Activated CD4-positive, alpha-beta T cell treated with anti-CD3 and anti-CD28 coated beads for 36 hours (primary cell): ENCODE measurements at regions of chr17 and their contacts with region 1.

Region 1: DNA sequence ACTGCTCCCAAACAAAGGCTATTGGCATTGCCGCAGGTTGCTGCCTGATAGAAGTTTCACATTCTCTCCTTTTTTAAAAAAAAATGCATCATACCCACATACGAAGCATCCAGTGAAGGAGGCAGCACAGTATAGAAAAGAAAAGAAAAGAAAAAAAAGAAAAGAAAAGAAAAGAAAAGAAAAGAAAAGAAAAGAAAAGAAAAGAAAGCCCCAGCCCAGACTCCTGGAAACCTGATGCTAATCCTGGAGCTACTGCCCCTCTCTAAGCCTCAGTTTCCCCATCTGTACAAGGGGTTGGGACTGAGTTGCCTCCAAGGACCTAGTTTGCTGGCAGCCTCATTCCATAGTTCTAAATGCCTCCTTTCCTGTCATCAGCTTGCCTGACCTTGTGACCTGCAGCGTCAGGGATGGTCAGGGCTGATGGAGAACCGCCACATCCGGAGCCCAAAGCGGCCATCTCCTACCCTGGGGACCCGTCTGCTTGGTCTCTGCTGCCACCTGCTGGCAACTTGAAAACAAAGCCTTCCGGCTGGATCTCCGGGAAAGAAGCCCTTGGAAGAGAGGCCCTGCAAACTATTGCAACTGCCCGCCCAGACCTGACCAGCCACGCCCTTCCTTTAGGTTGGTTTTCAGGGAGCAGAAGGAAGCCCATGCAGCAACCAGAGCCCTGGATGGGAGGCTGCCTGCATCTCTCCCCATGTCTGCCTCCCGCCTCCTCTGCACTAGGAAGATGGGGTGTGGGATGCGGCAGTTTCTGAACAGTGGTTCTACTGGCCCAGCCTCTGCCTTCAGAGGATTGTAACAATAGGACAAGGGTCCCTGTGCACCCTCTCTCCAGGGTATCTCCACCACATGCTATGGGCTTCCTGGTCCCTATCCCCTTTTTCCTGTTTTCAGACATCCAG is 13.0 kb downstream of the AIPL1 start:
- DNase-seq: peak; percentile 87
- ATAC-seq: peak; percentile 65
- H3K4me3 Mint-ChIP-seq: no peak overlapping the region
- H3K27ac Mint-ChIP-seq: no peak overlapping the region
- H3K4me1 Mint-ChIP-seq: peaks cover 2% of the 10 kb centered on the region
- H3K27me3 Mint-ChIP-seq: peaks cover 12% of the 10 kb centered on the region

Region 2: DNA sequence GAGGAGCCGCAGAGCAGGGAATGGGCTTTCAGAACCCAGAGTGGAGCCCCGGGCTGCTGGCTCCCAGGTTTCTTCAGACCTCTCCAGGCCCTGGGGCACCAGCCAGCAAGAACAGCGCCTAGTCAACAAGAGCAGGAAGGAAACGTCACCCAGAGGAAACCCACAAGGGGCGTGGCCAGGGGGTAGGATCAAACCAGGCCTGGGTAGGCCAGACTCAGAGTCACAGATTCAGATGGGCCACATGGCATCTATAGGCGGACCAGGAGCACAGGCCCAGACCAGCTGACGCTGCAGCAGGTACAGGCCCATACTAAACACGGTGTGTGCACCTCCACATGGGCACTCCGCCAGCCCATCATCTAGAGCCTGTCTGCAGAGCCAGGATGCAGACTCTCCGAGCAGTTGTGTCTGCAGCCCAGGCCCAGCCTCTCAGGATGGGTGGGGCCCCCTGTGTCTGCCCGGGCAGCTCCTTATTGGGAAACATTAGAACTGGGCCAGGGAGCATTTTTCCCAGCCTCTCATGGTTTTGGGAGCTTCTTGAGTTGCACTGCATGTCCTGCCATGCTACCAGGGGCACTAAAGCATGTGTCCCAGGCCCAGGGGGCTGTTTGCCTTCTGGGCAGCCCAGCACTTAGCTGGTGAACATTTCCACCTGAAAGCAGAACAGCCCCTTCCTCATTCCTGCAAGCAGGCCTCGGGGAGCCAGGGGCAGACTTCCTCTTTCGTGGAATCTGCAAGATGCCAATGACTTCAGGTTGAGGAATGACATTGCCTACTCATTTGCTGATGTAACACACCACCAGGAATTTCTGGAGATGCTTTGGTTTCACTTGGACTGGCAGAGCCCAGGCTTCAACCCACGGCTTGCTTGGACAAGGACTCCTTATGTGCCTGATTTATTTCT is 837.3 kb before region 1 on chr17 and contains the start of gene NLRP1:
- CTCF ChIA-PET with region 1: no interaction called
- POLR2A ChIA-PET with region 1: no interaction called
- intact Hi-C with region 1: loop called (anchors 1 kb)
- DNase-seq: peak; percentile 97
- ATAC-seq: peak; percentile 93
- H3K4me3 Mint-ChIP-seq: peak within 1 kb of the TSS; percentile 92
- H3K27ac Mint-ChIP-seq: peak within 1 kb of the TSS; percentile 94
- H3K4me1 Mint-ChIP-seq: peaks cover 62% of the 10 kb centered on the region
- H3K27me3 Mint-ChIP-seq: no peaks in the 10 kb centered on the region
- total RNA-seq, gene NLRP1: 31.2 to 34.0 TPM

Region 3: GRCh38 chr17:5592382-5592781 is 829.6 kb before region 1 on chr17:
- CTCF ChIA-PET with region 1: interaction called, 5 read pairs
- POLR2A ChIA-PET with region 1: no interaction called
- intact Hi-C with region 1: loop called (anchors 1 kb)
- DNase-seq: no peak
- ATAC-seq: no peak
- H3K4me3 Mint-ChIP-seq: no peak overlapping the region
- H3K27ac Mint-ChIP-seq: no peak overlapping the region
- H3K4me1 Mint-ChIP-seq: peaks cover under 1% of the 10 kb centered on the region
- H3K27me3 Mint-ChIP-seq: peaks cover 9% of the 10 kb centered on the region

Region 4: GRCh38 chr17:5706577-5707216 is 715.3 kb before region 1 on chr17:
- CTCF ChIA-PET with region 1: no interaction called
- POLR2A ChIA-PET with region 1: no interaction called
- intact Hi-C with region 1: loop called (anchors 5 kb)
- DNase-seq: peak; percentile 78
- ATAC-seq: peak; percentile 63
- H3K4me3 Mint-ChIP-seq: no peak overlapping the region
- H3K27ac Mint-ChIP-seq: no peak overlapping the region
- H3K4me1 Mint-ChIP-seq: no peaks in the 10 kb centered on the region
- H3K27me3 Mint-ChIP-seq: peaks cover 12% of the 10 kb centered on the region

Region 5: GRCh38 chr17:5793899-5794298 is 628.1 kb before region 1 on chr17:
- CTCF ChIA-PET with region 1: no interaction called
- POLR2A ChIA-PET with region 1: no interaction called
- intact Hi-C with region 1: loop called in 1 of 2 experiments (anchors 10 kb)
- DNase-seq: no peak
- ATAC-seq: no peak
- H3K4me3 Mint-ChIP-seq: no peak overlapping the region
- H3K27ac Mint-ChIP-seq: no peak overlapping the region
- H3K4me1 Mint-ChIP-seq: no peaks in the 10 kb centered on the region
- H3K27me3 Mint-ChIP-seq: peaks cover 28% of the 10 kb centered on the region

Region 6: DNA sequence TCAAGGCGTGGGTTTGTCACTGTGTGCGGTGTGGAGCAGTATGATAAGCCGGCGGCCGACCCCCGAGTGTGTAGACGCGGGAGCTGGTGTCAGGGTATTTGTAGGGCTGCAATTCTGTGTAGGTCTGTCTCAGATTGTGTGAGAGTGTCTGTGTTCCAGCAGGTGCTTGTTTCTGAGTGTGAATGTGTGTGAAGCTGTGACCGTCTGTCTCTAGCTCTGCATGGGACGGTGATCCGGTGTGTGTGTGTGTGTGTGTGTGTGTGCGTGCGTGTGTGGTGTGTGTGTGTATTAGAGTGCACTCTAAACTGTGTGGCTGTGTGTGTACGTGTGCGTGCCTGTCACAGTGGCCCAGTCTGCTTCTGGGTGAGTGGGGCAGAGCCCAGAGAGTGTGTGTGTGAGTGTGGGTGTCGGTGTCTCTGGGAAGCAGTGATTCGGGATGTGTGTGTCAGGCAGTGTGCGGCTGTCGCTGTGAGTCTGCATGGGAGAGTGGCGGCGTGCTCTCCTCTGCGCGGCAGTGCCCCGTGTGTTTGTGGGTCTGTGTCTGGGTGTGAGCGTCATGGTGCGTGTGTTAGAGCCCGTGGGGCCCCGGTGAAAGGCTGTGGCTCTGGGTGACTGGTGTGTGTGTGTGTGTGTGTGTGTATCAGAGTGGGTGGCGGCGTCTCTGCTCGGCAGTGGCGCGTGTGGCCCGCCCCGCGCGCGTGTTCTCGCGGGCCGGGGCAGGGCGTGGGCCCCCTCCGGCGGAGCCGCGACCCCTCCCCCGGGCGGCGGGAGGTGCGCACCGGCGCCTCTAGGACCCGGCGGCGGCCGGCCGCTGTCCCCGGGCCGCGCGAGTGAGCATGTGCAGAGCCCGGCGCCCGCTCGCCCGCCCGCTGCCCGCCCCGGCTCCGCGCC is 352.2 kb before region 1 on chr17 and contains the start of gene WSCD1:
- CTCF ChIA-PET with region 1: interaction called, 4 read pairs
- POLR2A ChIA-PET with region 1: no interaction called
- intact Hi-C with region 1: loop called in 1 of 2 experiments (anchors 10 kb)
- DNase-seq: peak; percentile 28
- ATAC-seq: peak; percentile 12
- H3K4me3 Mint-ChIP-seq: peak within 1 kb of the TSS; percentile 61
- H3K27ac Mint-ChIP-seq: no peak within 1 kb of the TSS
- H3K4me1 Mint-ChIP-seq: peaks cover 10% of the 10 kb centered on the region
- H3K27me3 Mint-ChIP-seq: peaks cover 55% of the 10 kb centered on the region
- total RNA-seq, gene WSCD1: 0.04 to 0.16 TPM

Region 7: DNA sequence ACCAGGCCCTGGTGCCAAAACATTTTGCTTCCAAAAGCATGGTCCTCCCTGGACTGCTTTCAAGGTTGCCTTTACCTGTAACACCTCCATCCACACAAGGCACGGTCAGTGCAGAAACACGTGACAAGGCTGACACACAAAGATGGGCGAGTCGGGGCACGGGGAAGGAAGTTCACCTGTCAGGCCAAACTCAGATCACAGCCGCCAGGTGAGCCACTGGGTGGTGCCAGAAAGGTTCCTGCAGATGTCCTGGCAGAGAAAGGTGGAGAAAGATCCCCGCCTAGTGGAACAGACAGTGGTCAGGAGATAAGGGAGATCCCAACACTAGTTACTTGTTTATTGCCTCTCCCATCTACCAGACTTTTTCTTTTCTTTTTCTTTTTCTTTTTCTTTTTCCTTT is 142.3 kb before region 1 on chr17:
- CTCF ChIA-PET with region 1: interaction called, 3 read pairs
- POLR2A ChIA-PET with region 1: no interaction called
- intact Hi-C with region 1: loop called in 1 of 2 experiments (anchors 5 kb)
- DNase-seq: peak; percentile 30
- ATAC-seq: no peak
- H3K4me3 Mint-ChIP-seq: no peak overlapping the region
- H3K27ac Mint-ChIP-seq: no peak overlapping the region
- H3K4me1 Mint-ChIP-seq: no peaks in the 10 kb centered on the region
- H3K27me3 Mint-ChIP-seq: peaks cover 12% of the 10 kb centered on the region

Region 8: DNA sequence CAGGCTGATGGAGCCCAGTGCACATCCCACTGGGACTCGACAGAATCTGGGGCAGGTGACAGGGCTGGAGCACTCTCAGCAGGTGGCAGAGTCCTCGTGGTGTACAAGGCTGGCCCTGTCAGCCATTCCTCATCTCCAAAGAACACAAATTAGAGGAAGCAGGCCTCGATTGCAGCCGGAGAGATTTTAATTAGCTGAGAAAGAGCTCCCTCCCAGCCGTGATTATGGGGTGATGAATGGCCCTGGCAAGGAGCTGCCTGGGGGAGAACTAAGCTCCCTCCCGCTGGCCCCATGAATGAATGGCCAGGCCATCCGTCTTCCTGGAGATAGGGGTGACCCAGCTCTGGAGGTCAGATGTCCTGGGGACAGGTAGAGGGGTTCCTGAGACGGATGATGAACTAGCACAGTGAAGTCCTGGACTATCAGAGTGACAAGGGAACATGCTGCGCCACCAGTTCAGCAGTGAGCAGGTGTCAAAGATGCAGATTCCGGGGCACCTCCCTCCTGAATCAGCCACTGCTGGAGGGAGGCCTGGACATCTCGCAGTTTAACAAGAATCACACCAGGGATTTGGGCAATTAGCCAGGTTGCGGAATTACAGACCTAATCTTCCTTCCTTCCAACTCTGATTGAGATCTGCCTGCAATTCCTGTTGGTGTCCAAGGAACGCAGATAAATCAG is 57.8 kb after region 1 on chr17:
- CTCF ChIA-PET with region 1: no interaction called
- POLR2A ChIA-PET with region 1: no interaction called
- intact Hi-C with region 1: no loop called
- DNase-seq: no peak
- ATAC-seq: no peak
- H3K4me3 Mint-ChIP-seq: no peak overlapping the region
- H3K27ac Mint-ChIP-seq: no peak overlapping the region
- H3K4me1 Mint-ChIP-seq: no peaks in the 10 kb centered on the region
- H3K27me3 Mint-ChIP-seq: peaks cover 4% of the 10 kb centered on the region

Region 9: DNA sequence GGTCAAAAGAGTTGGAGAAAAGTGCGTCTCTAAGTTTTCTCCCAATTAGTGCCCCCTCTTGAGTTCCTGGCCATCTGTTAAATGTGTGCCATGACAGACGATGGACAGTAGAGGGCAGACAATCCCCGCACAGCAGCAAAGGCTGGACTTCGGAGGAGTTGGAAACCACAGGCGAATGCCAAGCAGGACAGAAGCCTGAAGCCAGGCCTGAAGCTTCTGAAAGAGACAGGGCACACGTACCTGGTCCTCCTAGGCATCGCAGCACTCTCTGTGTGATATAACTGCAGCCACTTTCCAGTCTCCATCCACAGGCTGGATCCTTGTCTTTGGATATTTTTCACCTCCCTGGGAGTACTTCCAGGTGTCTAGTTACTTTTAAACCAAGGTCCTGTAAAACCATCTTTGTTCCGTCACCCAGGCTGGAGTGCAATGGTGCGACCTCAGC is 244.1 kb after region 1 on chr17:
- CTCF ChIA-PET with region 1: no interaction called
- POLR2A ChIA-PET with region 1: no interaction called
- intact Hi-C with region 1: no loop called
- DNase-seq: peak; percentile 69
- ATAC-seq: peak; percentile 75
- H3K4me3 Mint-ChIP-seq: no peak overlapping the region
- H3K27ac Mint-ChIP-seq: no peak overlapping the region
- H3K4me1 Mint-ChIP-seq: peaks cover 7% of the 10 kb centered on the region
- H3K27me3 Mint-ChIP-seq: no peaks in the 10 kb centered on the region

Region 10: GRCh38 chr17:6823011-6823442 is 401.1 kb after region 1 on chr17:
- CTCF ChIA-PET with region 1: no interaction called
- POLR2A ChIA-PET with region 1: no interaction called
- intact Hi-C with region 1: no loop called
- DNase-seq: no peak
- ATAC-seq: peak; percentile 33
- H3K4me3 Mint-ChIP-seq: no peak overlapping the region
- H3K27ac Mint-ChIP-seq: no peak overlapping the region
- H3K4me1 Mint-ChIP-seq: no peaks in the 10 kb centered on the region
- H3K27me3 Mint-ChIP-seq: peaks cover 26% of the 10 kb centered on the region